ENCODE measurements at regions of chr6 and their contacts with region 1.

Region 1: DNA sequence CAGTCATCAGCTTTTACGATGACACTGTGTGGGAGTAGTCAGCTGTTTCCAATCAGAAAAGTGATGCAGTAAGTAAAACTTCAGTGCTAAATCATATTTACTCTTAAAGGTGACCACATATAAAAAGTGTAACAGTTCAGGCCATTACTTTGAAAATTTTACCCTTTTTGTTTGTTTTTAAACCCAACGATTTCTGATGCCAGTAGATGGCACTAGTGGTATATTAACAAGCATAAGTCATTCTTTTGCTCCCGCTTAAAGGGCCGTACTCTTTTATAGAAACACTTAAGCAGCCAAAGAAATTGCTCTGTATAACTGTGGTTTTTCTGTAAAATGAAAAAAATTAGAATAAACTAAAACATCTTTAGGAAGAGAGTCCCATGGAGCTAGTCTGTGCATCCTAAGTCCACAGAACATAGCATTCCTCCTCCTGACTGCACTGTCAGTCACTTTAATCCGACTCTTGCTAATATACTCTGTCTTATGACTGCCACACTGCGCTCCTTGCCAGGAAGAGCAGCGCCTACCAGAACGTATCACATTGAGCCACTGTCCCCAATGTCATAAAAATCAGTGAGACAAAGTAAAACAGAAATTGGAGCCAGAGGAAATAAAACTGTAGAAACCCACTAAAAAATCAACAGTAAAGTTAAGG is 25.0 kb downstream of the HEBP2 start:
- DNase-seq: no peak
- ATAC-seq: peak; percentile 58 to 67 (median 64)
- H3K4me3 ChIP-seq: no peak overlapping the region
- H3K27ac ChIP-seq: peak overlapping the region; percentile 21 to 45 (median 42)
- H3K4me1 ChIP-seq: peaks cover 0 to 19% (median 5%) of the 10 kb centered on the region in 4 donors
- H3K27me3 ChIP-seq: no peaks in the 10 kb centered on the region
- CTCF ChIP-seq: peak; percentile 60 to 69 (median 66)
- POLR2A ChIP-seq: no peak

Region 2: GRCh38 chr6:138498629-138499302 is 69.7 kb after region 1 on chr6:
- intact Hi-C with region 1: no loop called
- DNase-seq: no peak
- ATAC-seq: peak; percentile 44 to 66 (median 61)
- H3K4me3 ChIP-seq: peak overlapping the region; percentile 22 to 57 (median 55)
- H3K27ac ChIP-seq: peak overlapping the region; percentile 66 to 86 (median 80)
- H3K4me1 ChIP-seq: peaks cover 0 to 51% (median 17%) of the 10 kb centered on the region in 4 donors
- H3K27me3 ChIP-seq: no peaks in the 10 kb centered on the region
- CTCF ChIP-seq: no peak
- POLR2A ChIP-seq: no peak

Region 3: GRCh38 chr6:138509371-138509770 is 80.3 kb after region 1 on chr6:
- intact Hi-C with region 1: loop called (anchors 5 to 10 kb)
- DNase-seq: peak in 1 of 3 donors; percentile 74
- ATAC-seq: peak; percentile 67 to 79 (median 69)
- H3K4me3 ChIP-seq: no peak overlapping the region
- H3K27ac ChIP-seq: peak overlapping the region in 2 of 3 donors; percentile 79 to 90
- H3K4me1 ChIP-seq: peaks cover 0 to 48% (median 24%) of the 10 kb centered on the region in 4 donors
- H3K27me3 ChIP-seq: no peaks in the 10 kb centered on the region
- CTCF ChIP-seq: peak; percentile 70 to 80 (median 72)
- POLR2A ChIP-seq: no peak

Region 4: GRCh38 chr6:138517635-138518034 is 88.6 kb after region 1 on chr6:
- intact Hi-C with region 1: loop called in 1 of 2 experiments (anchors 10 kb)
- DNase-seq: peak in 1 of 3 donors; percentile 65
- ATAC-seq: peak; percentile 64 to 90 (median 80)
- H3K4me3 ChIP-seq: no peak overlapping the region
- H3K27ac ChIP-seq: no peak overlapping the region
- H3K4me1 ChIP-seq: peaks cover 0 to 7% (median 3%) of the 10 kb centered on the region in 4 donors
- H3K27me3 ChIP-seq: no peaks in the 10 kb centered on the region
- CTCF ChIP-seq: peak; percentile 49 to 67 (median 56)
- POLR2A ChIP-seq: no peak

Measured in right lobe of liver (tissue), 6 donors.